Heart right ventricle (tissue), 16 donors: ENCODE measurements at regions of chr19 and their contacts with region 1.

Region 1: GRCh38 chr19:44903602-44904425 is 1.8 kb upstream of the APOE start:
- DNase-seq: peak; percentile 58 to 78
- ATAC-seq: peak; percentile 56 to 87 (median 74)
- H3K4me3 ChIP-seq: no peak overlapping the region
- H3K27ac ChIP-seq: no peak overlapping the region
- H3K4me1 ChIP-seq: peaks cover 0 to 24% (median 5%) of the 10 kb centered on the region in 9 donors
- H3K27me3 ChIP-seq: peaks cover 0 to 36% (median 23%) of the 10 kb centered on the region in 7 donors
- CTCF ChIP-seq: peak; percentile 97 to 100 (median 99)

Region 2: DNA sequence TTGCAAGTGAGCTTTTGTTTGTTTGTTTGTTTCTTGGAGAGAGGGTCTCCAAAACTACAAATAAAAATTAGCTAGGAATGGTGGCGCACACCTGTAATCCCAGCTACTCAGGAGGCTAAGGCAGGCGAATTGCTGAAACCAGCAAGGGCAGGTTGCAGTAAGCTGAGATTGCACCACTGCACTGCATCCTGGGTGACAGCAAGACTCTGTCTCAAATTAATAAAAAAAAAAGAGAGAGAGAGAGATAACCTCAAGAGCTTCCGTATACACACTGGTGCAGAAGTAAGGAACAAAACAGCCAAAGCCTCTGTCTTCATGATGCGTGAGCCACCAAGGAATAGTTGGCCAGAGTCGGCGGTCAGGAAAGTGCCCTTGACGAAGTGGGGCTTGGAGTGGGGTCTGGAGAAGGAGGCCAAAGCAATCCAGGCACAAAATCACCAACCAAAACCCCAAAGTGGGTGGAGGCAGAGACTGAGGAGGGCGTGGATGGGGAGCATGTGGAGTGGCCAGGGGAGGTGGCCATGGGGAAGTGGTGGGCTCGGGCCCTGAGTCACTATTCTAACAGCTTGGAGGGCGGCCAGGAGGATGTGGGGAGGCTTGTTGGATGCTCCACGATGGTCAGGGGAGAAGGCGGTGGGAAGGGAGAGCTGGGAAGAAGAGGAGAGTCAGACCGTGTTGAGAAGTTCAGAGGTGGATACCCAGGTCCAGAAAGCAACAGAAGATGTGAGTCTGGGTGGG is 33.9 kb before region 1 on chr19:
- intact Hi-C with region 1: no loop called
- DNase-seq: peak in 1 of 2 donors; percentile 71
- ATAC-seq: peak in 7 of 8 donors; percentile 23 to 51 (median 33)
- H3K4me3 ChIP-seq: no peak overlapping the region
- H3K27ac ChIP-seq: peak overlapping the region in 9 of 10 donors; percentile 27 to 84 (median 70)
- H3K4me1 ChIP-seq: peaks cover 6 to 78% (median 54%) of the 10 kb centered on the region in 9 donors
- H3K27me3 ChIP-seq: no peaks in the 10 kb centered on the region
- CTCF ChIP-seq: no peak

Region 3: GRCh38 chr19:44947041-44947581 is 43.3 kb after region 1 on chr19:
- intact Hi-C with region 1: loop called (anchors 1 to 5 kb)
- DNase-seq: no peak
- ATAC-seq: no peak
- H3K4me3 ChIP-seq: no peak overlapping the region
- H3K27ac ChIP-seq: no peak overlapping the region
- H3K4me1 ChIP-seq: peaks cover 0 to 23% (median 16%) of the 10 kb centered on the region in 9 donors
- H3K27me3 ChIP-seq: no peaks in the 10 kb centered on the region
- CTCF ChIP-seq: no peak

Region 4: GRCh38 chr19:44954824-44955586 is 51.2 kb after region 1 on chr19 and contains the start of gene CLPTM1:
- intact Hi-C with region 1: loop called in 9 of 10 experiments (anchors 1 to 5 kb)
- DNase-seq: peak; percentile 97 to 98
- ATAC-seq: peak; percentile 95 to 98 (median 97)
- H3K4me3 ChIP-seq: peak within 1 kb of the TSS; percentile 85 to 100 (median 96)
- H3K27ac ChIP-seq: peak within 1 kb of the TSS; percentile 84 to 97 (median 91)
- H3K4me1 ChIP-seq: peaks cover 21 to 74% (median 45%) of the 10 kb centered on the region in 9 donors
- H3K27me3 ChIP-seq: no peaks in the 10 kb centered on the region
- CTCF ChIP-seq: peak in 1 of 9 donors; percentile 13
- total RNA-seq, gene CLPTM1: 81.1 to 130 (median 95.7) TPM

Region 5: GRCh38 chr19:45059278-45059965 is 155.6 kb after region 1 on chr19:
- intact Hi-C with region 1: loop called in 3 of 10 experiments (anchors 10 kb)
- DNase-seq: peak; percentile 55 to 71
- ATAC-seq: peak in 7 of 8 donors; percentile 59 to 73 (median 67)
- H3K4me3 ChIP-seq: no peak overlapping the region
- H3K27ac ChIP-seq: no peak overlapping the region
- H3K4me1 ChIP-seq: no peaks in the 10 kb centered on the region
- H3K27me3 ChIP-seq: no peaks in the 10 kb centered on the region
- CTCF ChIP-seq: peak; percentile 75 to 88 (median 84)

Region 6: DNA sequence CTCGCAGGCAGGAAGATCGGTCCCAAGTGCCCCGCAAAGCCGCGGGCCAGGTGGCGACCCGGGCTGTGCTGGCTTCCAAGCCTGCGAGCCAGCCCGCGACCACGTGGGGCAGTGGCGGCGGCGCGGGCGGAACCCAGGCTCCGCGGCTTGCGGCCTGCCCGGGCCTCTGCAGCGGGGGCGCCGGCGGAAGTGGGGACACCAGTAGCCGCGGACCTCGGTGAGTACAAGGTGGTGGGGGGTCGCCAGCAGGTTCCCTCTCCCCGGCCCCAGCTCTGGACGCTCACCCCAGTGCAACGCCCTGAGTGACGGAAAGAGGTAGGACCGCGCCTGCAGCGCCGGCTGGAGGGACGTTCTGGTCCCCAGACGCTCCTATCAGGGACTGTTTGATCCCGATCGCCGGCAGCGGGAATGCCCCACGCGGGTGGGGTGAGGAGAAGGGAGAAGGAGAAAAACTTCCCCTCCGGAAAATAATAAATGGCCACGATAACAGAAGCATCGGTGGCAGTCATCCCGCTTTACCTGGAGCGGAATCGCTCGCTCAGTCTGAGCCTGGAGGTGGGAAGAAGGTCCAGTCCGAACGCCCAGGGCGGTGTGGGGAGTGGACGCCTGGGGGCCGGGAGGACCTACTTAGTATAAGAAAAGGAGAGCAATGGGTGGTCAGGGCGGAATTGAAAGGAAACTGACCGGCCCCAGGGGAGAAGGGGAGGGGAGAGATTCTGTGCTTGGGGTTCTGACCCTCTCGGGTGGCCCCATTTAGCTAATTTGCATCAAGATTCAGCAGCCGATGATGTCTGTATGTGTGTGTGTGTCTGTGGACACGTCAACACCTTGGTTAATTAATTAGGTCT is 175.5 kb after region 1 on chr19 and contains the start of gene GEMIN7:
- intact Hi-C with region 1: no loop called
- DNase-seq: peak; percentile 68 to 78
- ATAC-seq: peak; percentile 85 to 92 (median 90)
- H3K4me3 ChIP-seq: peak within 1 kb of the TSS; percentile 59 to 100 (median 94)
- H3K27ac ChIP-seq: peak within 1 kb of the TSS in 9 of 10 donors; percentile 68 to 93 (median 82)
- H3K4me1 ChIP-seq: peaks cover 13 to 51% (median 33%) of the 10 kb centered on the region in 9 donors
- H3K27me3 ChIP-seq: no peaks in the 10 kb centered on the region
- CTCF ChIP-seq: peak in 5 of 9 donors; percentile 10 to 30 (median 21)
- total RNA-seq, gene GEMIN7: 10.7 to 23.5 (median 13.0) TPM

Region 7: GRCh38 chr19:45245334-45245787 is 341.5 kb after region 1 on chr19 and contains the start of gene EXOC3L2:
- intact Hi-C with region 1: loop called in 1 of 10 experiments (anchors 5 kb)
- DNase-seq: peak; percentile 49 to 70
- ATAC-seq: peak; percentile 47 to 86 (median 70)
- H3K4me3 ChIP-seq: peak within 1 kb of the TSS in 8 of 10 donors; percentile 12 to 43 (median 38)
- H3K27ac ChIP-seq: peak within 1 kb of the TSS; percentile 19 to 80 (median 46)
- H3K4me1 ChIP-seq: peaks cover 2 to 41% (median 14%) of the 10 kb centered on the region in 9 donors
- H3K27me3 ChIP-seq: no peaks in the 10 kb centered on the region
- CTCF ChIP-seq: no peak
- total RNA-seq, gene EXOC3L2: 0.27 to 2.0 (median 1.1) TPM

Region 8: GRCh38 chr19:45331423-45331822 is 427.6 kb after region 1 on chr19:
- intact Hi-C with region 1: loop called in 2 of 10 experiments (anchors 5 to 10 kb)
- DNase-seq: no peak
- ATAC-seq: no peak
- H3K4me3 ChIP-seq: no peak overlapping the region
- H3K27ac ChIP-seq: no peak overlapping the region
- H3K4me1 ChIP-seq: peaks cover 0 to 1% (median 0%) of the 10 kb centered on the region in 9 donors
- H3K27me3 ChIP-seq: no peaks in the 10 kb centered on the region
- CTCF ChIP-seq: no peak

Region 9: GRCh38 chr19:45340232-45340898 is 436.6 kb after region 1 on chr19 and contains the start of gene KLC3:
- intact Hi-C with region 1: loop called in 2 of 10 experiments (anchors 5 to 10 kb)
- DNase-seq: no peak
- ATAC-seq: peak in 1 of 8 donors; percentile 34
- H3K4me3 ChIP-seq: peak within 1 kb of the TSS in 8 of 10 donors; percentile 17 to 34 (median 30)
- H3K27ac ChIP-seq: no peak within 1 kb of the TSS
- H3K4me1 ChIP-seq: peaks cover 0 to 10% (median 5%) of the 10 kb centered on the region in 9 donors
- H3K27me3 ChIP-seq: peaks cover 6 to 39% (median 29%) of the 10 kb centered on the region in 7 donors
- CTCF ChIP-seq: no peak
- total RNA-seq, gene KLC3: 0.14 TPM in 2 of 10 donors, not detected in the others